WTC11 (cell line): ENCODE measurements at regions of chr11 and their contacts with region 1.

Region 1: GRCh38 chr11:14454861-14455632 is 44.6 kb downstream of the COPB1 start:
- DNase-seq: no peak
- ATAC-seq: peak; percentile 39
- H3K4me3 Mint-ChIP-seq: no peak overlapping the region
- H3K27ac Mint-ChIP-seq: no peak overlapping the region
- H3K4me1 Mint-ChIP-seq: no peaks in the 10 kb centered on the region
- H3K27me3 Mint-ChIP-seq: no peaks in the 10 kb centered on the region
- CTCF ChIP-seq: peak; percentile 40

Region 2: DNA sequence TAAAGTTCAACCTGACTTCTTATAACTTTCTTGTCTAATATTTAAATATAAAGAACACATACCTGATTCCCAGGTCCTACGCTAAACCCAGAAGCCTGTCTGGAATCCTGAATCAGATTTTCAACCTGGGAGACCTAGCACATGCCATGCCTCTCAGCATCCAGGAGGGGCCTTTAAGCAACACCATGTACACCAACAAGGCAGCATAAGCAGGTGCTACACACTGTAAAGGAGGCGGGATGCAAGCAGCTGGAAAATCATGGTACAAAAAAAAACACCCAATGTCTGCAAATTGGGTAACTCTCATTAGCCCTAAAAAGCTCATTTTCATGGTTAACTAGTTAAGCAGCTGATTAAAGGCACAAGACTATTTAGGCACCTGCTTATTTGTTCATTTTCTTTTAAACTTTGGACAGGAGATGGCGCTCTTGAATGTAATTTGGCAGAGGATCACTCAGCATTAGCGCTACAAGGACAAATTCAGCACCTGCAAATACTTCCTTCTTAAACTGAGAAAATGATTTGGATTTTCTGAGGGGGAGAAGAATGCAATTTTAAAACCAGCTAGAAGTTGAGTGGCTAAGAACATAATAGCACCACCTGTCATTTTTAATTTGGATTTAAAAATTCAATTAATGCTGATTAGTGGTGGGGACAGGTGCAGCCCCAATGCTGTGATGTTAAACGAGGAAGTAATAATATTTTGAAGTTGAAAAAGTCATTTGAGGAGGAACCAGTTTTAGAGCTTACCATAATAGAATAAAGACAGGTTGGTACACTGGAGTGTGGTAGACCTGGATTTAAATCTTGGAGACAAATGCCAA is 682.6 kb before region 1 on chr11:
- CTCF ChIA-PET with region 1: interaction called, 11 read pairs
- POLR2A ChIA-PET with region 1: no interaction called
- DNase-seq: no peak
- ATAC-seq: peak; percentile 69
- H3K4me3 Mint-ChIP-seq: no peak overlapping the region
- H3K27ac Mint-ChIP-seq: no peak overlapping the region
- H3K4me1 Mint-ChIP-seq: peaks cover 29% of the 10 kb centered on the region
- H3K27me3 Mint-ChIP-seq: no peaks in the 10 kb centered on the region; the same call in 1 of the 2 replicates
- CTCF ChIP-seq: 0 out of 2 replicates have a peak, but pooled peaks have one; percentile 22

Region 3: DNA sequence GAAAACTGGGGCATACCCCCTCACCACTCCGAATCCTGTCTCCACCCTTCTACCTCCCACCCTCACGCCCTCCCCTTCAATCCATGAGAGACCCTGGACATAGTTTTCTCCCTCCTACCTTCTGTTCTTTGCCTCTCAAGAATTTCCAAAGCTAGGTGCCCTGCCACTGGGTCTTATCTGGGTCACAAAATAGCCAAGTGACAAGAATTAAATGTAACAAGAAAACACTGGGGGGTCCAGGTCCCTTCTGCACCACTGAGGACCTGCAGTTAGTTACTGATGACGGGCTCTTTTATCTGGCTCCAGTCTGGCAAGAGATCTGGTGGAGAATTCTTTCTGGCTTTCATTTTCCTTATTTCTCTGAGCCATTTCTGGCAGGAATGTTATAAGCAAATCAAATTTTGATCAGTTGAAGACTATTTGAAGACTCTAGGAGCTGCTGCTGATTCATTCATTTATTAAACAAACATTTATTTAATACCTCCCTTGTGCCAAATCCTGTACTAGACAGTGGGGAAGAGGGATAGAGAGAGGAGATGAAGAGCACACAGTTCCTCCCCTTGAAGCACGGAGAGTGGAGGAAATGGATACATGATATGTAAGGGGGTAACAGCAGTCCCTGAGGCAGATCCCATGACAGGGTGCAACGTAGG is 231.3 kb before region 1 on chr11:
- CTCF ChIA-PET with region 1: no interaction called
- POLR2A ChIA-PET with region 1: no interaction called
- DNase-seq: no peak
- ATAC-seq: peak; percentile 20; the same call in 1 of the 2 replicates
- H3K4me3 Mint-ChIP-seq: no peak overlapping the region
- H3K27ac Mint-ChIP-seq: no peak overlapping the region
- H3K4me1 Mint-ChIP-seq: peaks cover 21% of the 10 kb centered on the region
- H3K27me3 Mint-ChIP-seq: no peaks in the 10 kb centered on the region; the same call in 1 of the 2 replicates
- CTCF ChIP-seq: no peak

Region 4: DNA sequence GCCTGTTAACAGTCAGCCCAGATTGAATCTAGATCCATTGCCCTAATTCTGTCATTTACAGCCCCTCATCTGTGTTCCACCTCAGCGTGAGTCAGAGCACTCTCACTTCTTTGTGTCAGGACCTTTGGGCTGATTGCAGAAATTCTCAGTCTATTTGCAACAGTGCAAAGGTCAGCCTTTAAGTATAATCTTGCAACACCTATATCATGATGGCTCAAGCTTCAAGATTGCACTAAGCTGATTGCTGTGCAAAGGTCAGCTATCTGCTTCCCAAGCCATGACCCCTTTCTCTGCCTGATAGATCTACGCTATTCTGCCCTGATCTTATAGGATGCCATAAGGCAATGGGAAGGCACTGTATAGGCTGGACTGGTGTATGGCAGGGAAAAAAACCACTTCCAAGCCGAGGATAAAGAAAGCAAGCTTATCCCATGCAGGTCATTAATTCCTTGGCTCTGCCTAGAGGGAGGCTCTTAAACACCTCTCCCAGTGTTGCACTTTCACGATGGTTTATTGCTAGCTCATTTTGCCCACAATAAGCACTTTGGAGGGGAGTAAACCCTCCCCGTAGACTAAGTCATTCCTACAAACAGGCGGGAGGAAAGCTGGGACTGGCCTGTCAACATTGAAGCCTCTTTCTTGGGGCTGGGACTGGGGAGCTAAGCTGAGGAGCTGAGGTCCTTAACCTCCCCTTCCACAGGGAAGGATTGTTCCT is 196.7 kb before region 1 on chr11:
- CTCF ChIA-PET with region 1: interaction called, 11 read pairs
- POLR2A ChIA-PET with region 1: interaction called, 5 read pairs
- DNase-seq: no peak
- ATAC-seq: no peak; the same call in 1 of the 2 replicates
- H3K4me3 Mint-ChIP-seq: no peak overlapping the region
- H3K27ac Mint-ChIP-seq: no peak overlapping the region
- H3K4me1 Mint-ChIP-seq: no peaks in the 10 kb centered on the region
- H3K27me3 Mint-ChIP-seq: peaks cover 19% of the 10 kb centered on the region
- CTCF ChIP-seq: no peak

Region 5: GRCh38 chr11:14380947-14381561 is 74.0 kb before region 1 on chr11:
- CTCF ChIA-PET with region 1: interaction called, 14 read pairs
- POLR2A ChIA-PET with region 1: no interaction called
- DNase-seq: peak; percentile 69
- ATAC-seq: peak; percentile 90
- H3K4me3 Mint-ChIP-seq: peak overlapping the region; percentile 67
- H3K27ac Mint-ChIP-seq: no peak overlapping the region
- H3K4me1 Mint-ChIP-seq: peaks cover 9% of the 10 kb centered on the region; the same call in 1 of the 2 replicates
- H3K27me3 Mint-ChIP-seq: peaks cover 41% of the 10 kb centered on the region
- CTCF ChIP-seq: no peak

Region 6: GRCh38 chr11:14413307-14414069 is 41.6 kb before region 1 on chr11:
- CTCF ChIA-PET with region 1: interaction called, 37 read pairs
- POLR2A ChIA-PET with region 1: interaction called, 10 read pairs
- DNase-seq: peak; percentile 64
- ATAC-seq: peak; percentile 84
- H3K4me3 Mint-ChIP-seq: no peak overlapping the region
- H3K27ac Mint-ChIP-seq: peak overlapping the region; percentile 37; the same call in 1 of the 2 replicates
- H3K4me1 Mint-ChIP-seq: peaks cover 67% of the 10 kb centered on the region
- H3K27me3 Mint-ChIP-seq: no peaks in the 10 kb centered on the region; the same call in 1 of the 2 replicates
- CTCF ChIP-seq: peak; percentile 52

Region 7: GRCh38 chr11:14443638-14444037 is 11.4 kb before region 1 on chr11:
- CTCF ChIA-PET with region 1: interaction called, 10 read pairs
- POLR2A ChIA-PET with region 1: no interaction called
- DNase-seq: no peak
- ATAC-seq: no peak
- H3K4me3 Mint-ChIP-seq: no peak overlapping the region
- H3K27ac Mint-ChIP-seq: no peak overlapping the region
- H3K4me1 Mint-ChIP-seq: no peaks in the 10 kb centered on the region
- H3K27me3 Mint-ChIP-seq: no peaks in the 10 kb centered on the region
- CTCF ChIP-seq: no peak

Region 8: DNA sequence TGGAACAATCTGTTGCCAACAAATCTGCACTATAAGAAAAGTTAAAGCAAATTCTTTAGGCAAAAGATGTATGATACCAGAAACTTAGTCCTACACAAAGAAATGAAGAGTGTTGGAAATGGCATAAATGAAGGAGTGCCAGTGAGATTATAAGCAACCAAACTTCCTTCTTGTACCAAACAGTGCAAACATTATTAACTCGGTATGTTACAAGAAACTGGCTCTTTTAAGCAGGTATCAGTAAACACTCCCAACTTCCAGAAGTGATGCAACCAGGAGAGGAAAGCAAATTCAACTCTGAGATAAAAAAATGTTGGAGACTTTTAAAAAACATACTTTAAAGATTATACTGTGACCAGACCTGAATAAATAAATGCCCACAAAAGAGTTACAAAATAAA is 16.1 kb after region 1 on chr11:
- CTCF ChIA-PET with region 1: interaction called, 13 read pairs
- POLR2A ChIA-PET with region 1: no interaction called
- DNase-seq: no peak
- ATAC-seq: no peak
- H3K4me3 Mint-ChIP-seq: no peak overlapping the region
- H3K27ac Mint-ChIP-seq: no peak overlapping the region
- H3K4me1 Mint-ChIP-seq: no peaks in the 10 kb centered on the region
- H3K27me3 Mint-ChIP-seq: no peaks in the 10 kb centered on the region
- CTCF ChIP-seq: no peak

Region 9: GRCh38 chr11:14554959-14555358 is 99.9 kb after region 1 on chr11:
- CTCF ChIA-PET with region 1: no interaction called
- POLR2A ChIA-PET with region 1: no interaction called
- DNase-seq: no peak
- ATAC-seq: no peak
- H3K4me3 Mint-ChIP-seq: no peak overlapping the region
- H3K27ac Mint-ChIP-seq: no peak overlapping the region
- H3K4me1 Mint-ChIP-seq: no peaks in the 10 kb centered on the region
- H3K27me3 Mint-ChIP-seq: no peaks in the 10 kb centered on the region; the same call in 1 of the 2 replicates
- CTCF ChIP-seq: no peak